HepG2 (cell line): ENCODE measurements at regions of chr2 and their contacts with region 1.

Region 1: GRCh38 chr2:27370026-27370815 is at the starts of genes EIF2B4 and SNX17:
- DNase-seq: peak; percentile 99
- ATAC-seq: peak; percentile 89
- H3K4me3 ChIP-seq: peak within 1 kb of the TSS; percentile 88 to 96 (median 95)
- H3K27ac ChIP-seq: peak within 1 kb of the TSS; percentile 83
- H3K4me1 ChIP-seq: peaks cover 41% of the 10 kb centered on the region
- H3K27me3 ChIP-seq: no peaks in the 10 kb centered on the region; a peak in 1 of 5 replicates
- CTCF ChIP-seq: peak; percentile 100
- EP300 ChIP-seq: peak; percentile 53 to 68
- POLR2A ChIP-seq: peak in 1 of 2 experiments; percentile 92; a peak in 2 of 4 replicates
- RAD21 ChIP-seq: peak; percentile 97
- total RNA-seq, gene EIF2B4: 91.5 and 105 TPM in 2 replicates
- total RNA-seq, gene SNX17: 94.9 and 109 TPM in 2 replicates

Region 2: GRCh38 chr2:27249891-27250651 is 120.2 kb before region 1 on chr2:
- CTCF ChIA-PET with region 1: no interaction called
- POLR2A ChIA-PET with region 1: no interaction called
- in situ Hi-C with region 1: no loop called
- intact Hi-C with region 1: loop called (anchors 10 kb)
- DNase-seq: peak; percentile 68
- ATAC-seq: peak; percentile 87
- H3K4me3 ChIP-seq: peak overlapping the region; percentile 30 to 70 (median 31)
- H3K27ac ChIP-seq: no peak overlapping the region
- H3K4me1 ChIP-seq: peaks cover 25% of the 10 kb centered on the region
- H3K27me3 ChIP-seq: peaks cover 0 to 13% of the 10 kb centered on the region in 2 experiments; a peak in 3 of 5 replicates
- CTCF ChIP-seq: peak; percentile 99
- EP300 ChIP-seq: no peak
- POLR2A ChIP-seq: 0 out of 4 replicates have a peak, but pooled peaks of 1 of the 2 experiments have one; percentile 22
- RAD21 ChIP-seq: peak; percentile 97

Region 3: GRCh38 chr2:27336173-27336572 is 34.0 kb before region 1 on chr2:
- CTCF ChIA-PET with region 1: no interaction called
- POLR2A ChIA-PET with region 1: no interaction called
- in situ Hi-C with region 1: no loop called
- intact Hi-C with region 1: no loop called
- DNase-seq: no peak
- ATAC-seq: peak; percentile 14; the same call in 1 of the 3 replicates
- H3K4me3 ChIP-seq: no peak overlapping the region
- H3K27ac ChIP-seq: no peak overlapping the region
- H3K4me1 ChIP-seq: no peaks in the 10 kb centered on the region
- H3K27me3 ChIP-seq: no peaks in the 10 kb centered on the region
- CTCF ChIP-seq: no peak
- EP300 ChIP-seq: no peak
- POLR2A ChIP-seq: no peak
- RAD21 ChIP-seq: no peak

Region 4: GRCh38 chr2:27356382-27357181 is 13.6 kb before region 1 on chr2 and contains the start of gene GTF3C2:
- CTCF ChIA-PET with region 1: no interaction called
- POLR2A ChIA-PET with region 1: interaction called, 125 read pairs
- in situ Hi-C with region 1: no loop called
- intact Hi-C with region 1: loop called (anchors 2 kb)
- DNase-seq: peak; percentile 99
- ATAC-seq: peak; percentile 88
- H3K4me3 ChIP-seq: peak within 1 kb of the TSS; percentile 72 to 91 (median 85)
- H3K27ac ChIP-seq: peak within 1 kb of the TSS; percentile 96
- H3K4me1 ChIP-seq: peaks cover 64% of the 10 kb centered on the region
- H3K27me3 ChIP-seq: no peaks in the 10 kb centered on the region; a peak in 1 of 5 replicates
- CTCF ChIP-seq: 0 out of 2 replicates have a peak, but pooled peaks have one; percentile 25
- EP300 ChIP-seq: peak in 1 of 2 experiments; percentile 55; a peak in 3 of 4 replicates
- POLR2A ChIP-seq: peak; percentile 58 to 60
- RAD21 ChIP-seq: peak; percentile 45; the same call in 1 of the 2 replicates
- total RNA-seq, gene GTF3C2: 77.5 and 80.0 TPM in 2 replicates

Region 5: GRCh38 chr2:27380626-27381545 is 10.7 kb after region 1 on chr2 and contains the start of gene ZNF513:
- CTCF ChIA-PET with region 1: no interaction called
- POLR2A ChIA-PET with region 1: interaction called, 38 read pairs
- in situ Hi-C with region 1: no loop called
- intact Hi-C with region 1: no loop called
- DNase-seq: peak; percentile 63
- ATAC-seq: peak; percentile 56
- H3K4me3 ChIP-seq: peak within 1 kb of the TSS; percentile 50 to 75 (median 63)
- H3K27ac ChIP-seq: peak within 1 kb of the TSS; percentile 85
- H3K4me1 ChIP-seq: peaks cover 26% of the 10 kb centered on the region
- H3K27me3 ChIP-seq: no peaks in the 10 kb centered on the region
- CTCF ChIP-seq: peak; percentile 10; the same call in 1 of the 2 replicates
- EP300 ChIP-seq: 0 out of 4 replicates have a peak, but pooled peaks of 1 of the 2 experiments have one; percentile 5
- POLR2A ChIP-seq: peak in 1 of 2 experiments; percentile 17; a peak in 1 of 4 replicates
- RAD21 ChIP-seq: peak; percentile 11; the same call in 1 of the 2 replicates
- total RNA-seq, gene ZNF513: 2.4 and 4.9 TPM in 2 replicates